Sigmoid colon (tissue), 7 donors: ENCODE measurements at regions of chr4 and their contacts with region 1.

Region 1: GRCh38 chr4:167989815-167990214 is 102.5 kb upstream of the ANXA10 start:
- DNase-seq: no peak
- H3K4me3 ChIP-seq: no peak overlapping the region
- H3K27ac ChIP-seq: no peak overlapping the region
- H3K4me1 ChIP-seq: no peaks in the 10 kb centered on the region
- H3K27me3 ChIP-seq: no peaks in the 10 kb centered on the region
- CTCF ChIP-seq: no peak
- EP300 ChIP-seq: no peak
- POLR2A ChIP-seq: no peak

Region 2: DNA sequence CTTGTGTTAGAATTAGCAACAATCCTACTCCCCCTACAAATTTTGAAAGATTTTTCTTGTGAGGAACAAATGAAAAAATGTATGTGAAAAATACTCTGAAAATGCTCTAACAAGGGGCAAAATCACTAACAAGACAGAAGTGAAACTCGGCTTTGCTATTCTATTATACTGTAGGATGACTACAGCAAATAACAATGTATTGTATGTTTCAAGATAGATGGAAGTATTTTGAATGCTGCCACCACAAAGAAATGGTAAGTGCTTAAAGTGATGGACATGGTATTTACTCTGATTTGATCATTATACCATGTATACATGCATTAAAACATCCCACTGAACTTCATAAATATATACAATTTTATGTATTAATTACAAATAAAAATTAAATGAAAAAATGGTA is 948.3 kb before region 1 on chr4:
- intact Hi-C with region 1: loop called (anchors 5 kb)
- DNase-seq: no peak
- H3K4me3 ChIP-seq: no peak overlapping the region
- H3K27ac ChIP-seq: no peak overlapping the region
- H3K4me1 ChIP-seq: no peaks in the 10 kb centered on the region
- H3K27me3 ChIP-seq: no peaks in the 10 kb centered on the region
- CTCF ChIP-seq: no peak
- EP300 ChIP-seq: no peak
- POLR2A ChIP-seq: no peak

Region 3: GRCh38 chr4:168167714-168168284 is 178.0 kb after region 1 on chr4:
- intact Hi-C with region 1: no loop called
- DNase-seq: no peak
- H3K4me3 ChIP-seq: no peak overlapping the region
- H3K27ac ChIP-seq: no peak overlapping the region
- H3K4me1 ChIP-seq: no peaks in the 10 kb centered on the region
- H3K27me3 ChIP-seq: no peaks in the 10 kb centered on the region
- CTCF ChIP-seq: no peak
- EP300 ChIP-seq: no peak
- POLR2A ChIP-seq: no peak

Region 4: GRCh38 chr4:168598191-168598590 is 608.4 kb after region 1 on chr4:
- intact Hi-C with region 1: no loop called
- DNase-seq: no peak
- H3K4me3 ChIP-seq: no peak overlapping the region
- H3K27ac ChIP-seq: no peak overlapping the region
- H3K4me1 ChIP-seq: peaks cover 0 to 13% (median 10%) of the 10 kb centered on the region in 4 donors
- H3K27me3 ChIP-seq: no peaks in the 10 kb centered on the region
- CTCF ChIP-seq: no peak
- EP300 ChIP-seq: no peak
- POLR2A ChIP-seq: no peak